H1 (cell line): ENCODE measurements at regions of chrX and their contacts with region 1.

Region 1: GRCh38 chrX:111244235-111244750 is 26.0 kb downstream of the CAPN6 start:
- DNase-seq: no peak
- H3K4me3 ChIP-seq: no peak overlapping the region
- H3K27ac ChIP-seq: no peak overlapping the region
- H3K4me1 ChIP-seq: no peaks in the 10 kb centered on the region
- H3K27me3 ChIP-seq: no peaks in the 10 kb centered on the region
- CTCF ChIP-seq: peak in 1 of 3 experiments; percentile 34; a peak in 2 of 4 replicates
- EP300 ChIP-seq: no peak
- POLR2A ChIP-seq: no peak
- RAD21 ChIP-seq: peak; percentile 67 to 70

Region 2: DNA sequence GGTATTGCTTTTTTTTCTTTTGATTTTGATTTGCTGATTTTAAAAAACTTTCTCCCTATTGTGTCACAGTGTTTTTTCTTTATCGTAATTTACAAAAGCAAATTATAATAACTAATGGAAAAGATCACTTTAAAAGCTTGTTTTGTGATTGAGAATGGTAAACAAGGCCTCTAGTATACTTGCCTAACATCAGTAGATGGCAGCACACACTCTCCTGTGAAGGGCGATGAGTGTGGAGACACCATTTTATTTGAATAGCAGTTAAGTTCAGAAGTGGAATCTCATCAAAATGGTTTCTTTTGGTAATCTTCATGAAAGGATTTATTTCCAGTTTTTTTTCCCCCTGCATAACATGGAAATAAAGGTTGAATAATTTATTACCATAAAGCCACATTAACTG is 76.0 kb before region 1 on chrX:
- CTCF ChIA-PET with region 1: interaction called, 14 read pairs
- POLR2A ChIA-PET with region 1: no interaction called
- DNase-seq: no peak
- H3K4me3 ChIP-seq: no peak overlapping the region
- H3K27ac ChIP-seq: no peak overlapping the region
- H3K4me1 ChIP-seq: no peaks in the 10 kb centered on the region
- H3K27me3 ChIP-seq: no peaks in the 10 kb centered on the region
- CTCF ChIP-seq: peak in 1 of 3 experiments; percentile 46; a peak in 2 of 4 replicates
- EP300 ChIP-seq: no peak
- POLR2A ChIP-seq: no peak
- RAD21 ChIP-seq: peak; percentile 62 to 70

Region 3: GRCh38 chrX:111257733-111258132 is 13.4 kb after region 1 on chrX:
- CTCF ChIA-PET with region 1: interaction called, 15 read pairs
- POLR2A ChIA-PET with region 1: no interaction called
- DNase-seq: no peak
- H3K4me3 ChIP-seq: no peak overlapping the region
- H3K27ac ChIP-seq: no peak overlapping the region
- H3K4me1 ChIP-seq: no peaks in the 10 kb centered on the region
- H3K27me3 ChIP-seq: no peaks in the 10 kb centered on the region
- CTCF ChIP-seq: no peak
- EP300 ChIP-seq: no peak
- POLR2A ChIP-seq: no peak
- RAD21 ChIP-seq: no peak